GM12878 (cell line): ENCODE measurements at regions of chr2 and their contacts with region 1.

Region 1: GRCh38 chr2:215912299-215912842 is 101.0 kb downstream of the MREG start:
- DNase-seq: no peak
- ATAC-seq: no peak
- H3K4me3 ChIP-seq: no peak overlapping the region
- H3K27ac ChIP-seq: no peak overlapping the region
- H3K4me1 ChIP-seq: peaks cover 10% of the 10 kb centered on the region; the same call in 1 of the 2 replicates
- H3K27me3 ChIP-seq: no peaks in the 10 kb centered on the region
- CTCF ChIP-seq: no peak
- EP300 ChIP-seq: no peak
- POLR2A ChIP-seq: no peak
- RAD21 ChIP-seq: no peak

Region 2: GRCh38 chr2:215567504-215567903 is 344.9 kb before region 1 on chr2:
- CTCF ChIA-PET with region 1: no interaction called
- POLR2A ChIA-PET with region 1: no interaction called
- RAD21 ChIA-PET with region 1: interaction called, 23 read pairs
- SMC1A ChIA-PET with region 1: interaction called, 25 read pairs
- in situ Hi-C with region 1: no loop called
- intact Hi-C with region 1: no loop called
- DNase-seq: peak; percentile 38
- ATAC-seq: peak; percentile 98
- H3K4me3 ChIP-seq: no peak overlapping the region
- H3K27ac ChIP-seq: no peak overlapping the region
- H3K4me1 ChIP-seq: no peaks in the 10 kb centered on the region
- H3K27me3 ChIP-seq: no peaks in the 10 kb centered on the region
- CTCF ChIP-seq: no peak
- EP300 ChIP-seq: peak; percentile 66 to 85
- POLR2A ChIP-seq: no peak
- RAD21 ChIP-seq: no peak

Region 3: DNA sequence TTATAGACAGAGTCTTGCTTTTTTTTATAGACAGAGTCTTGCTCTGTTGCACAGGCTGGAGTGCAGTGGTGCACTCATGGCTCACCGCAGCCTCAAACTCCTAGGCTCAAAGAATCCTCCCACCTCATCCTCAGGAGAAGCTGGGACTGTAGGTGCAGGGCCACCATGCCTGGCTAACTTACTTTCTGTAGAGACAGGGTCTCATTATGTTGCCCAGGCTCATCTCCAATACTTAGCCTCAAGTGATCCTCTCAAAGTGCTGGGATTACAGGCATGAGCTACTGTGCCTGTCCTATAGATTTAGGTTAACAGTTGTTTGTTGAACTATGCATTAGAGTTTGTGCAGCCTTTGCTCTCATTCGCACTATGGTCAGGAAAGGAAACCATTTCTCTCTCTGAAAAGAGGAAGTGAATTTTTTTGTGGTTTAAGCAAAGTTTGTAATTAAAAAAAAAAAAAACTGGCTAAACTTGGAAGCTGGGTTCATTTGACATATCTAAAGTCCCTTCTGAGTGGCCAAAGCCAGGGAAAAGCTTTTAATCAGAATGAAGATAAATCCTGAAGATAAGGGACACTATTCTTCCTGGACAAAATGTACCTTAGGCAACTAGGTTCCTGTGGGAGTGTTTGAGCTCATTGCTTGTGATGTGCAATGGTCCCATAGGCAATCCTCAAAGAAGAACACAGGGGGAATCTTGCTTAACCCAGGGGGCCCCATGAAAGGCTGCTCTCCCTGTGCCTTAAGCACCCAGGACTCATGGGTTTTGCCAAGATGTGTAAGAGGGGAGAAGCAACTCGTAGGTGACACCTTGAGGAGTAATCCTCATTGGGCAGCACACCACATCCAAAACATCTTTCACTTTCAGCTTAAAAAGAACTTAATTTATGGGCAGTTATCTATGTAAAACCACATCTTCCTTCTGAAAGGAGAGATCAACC is 100.7 kb before region 1 on chr2:
- CTCF ChIA-PET with region 1: interaction called, 5 read pairs
- POLR2A ChIA-PET with region 1: interaction called, 7 read pairs
- RAD21 ChIA-PET with region 1: interaction called, 39 read pairs
- SMC1A ChIA-PET with region 1: interaction called, 17 read pairs
- in situ Hi-C with region 1: no loop called
- intact Hi-C with region 1: loop called (anchors 5 kb)
- DNase-seq: peak; percentile 90
- ATAC-seq: peak; percentile 98
- H3K4me3 ChIP-seq: peak overlapping the region; percentile 30; the same call in 1 of the 2 replicates
- H3K27ac ChIP-seq: peak overlapping the region; percentile 45
- H3K4me1 ChIP-seq: peaks cover 19% of the 10 kb centered on the region
- H3K27me3 ChIP-seq: no peaks in the 10 kb centered on the region
- CTCF ChIP-seq: no peak
- EP300 ChIP-seq: peak in 1 of 2 experiments; percentile 87; a peak in 2 of 4 replicates
- POLR2A ChIP-seq: no peak
- RAD21 ChIP-seq: no peak

Region 4: DNA sequence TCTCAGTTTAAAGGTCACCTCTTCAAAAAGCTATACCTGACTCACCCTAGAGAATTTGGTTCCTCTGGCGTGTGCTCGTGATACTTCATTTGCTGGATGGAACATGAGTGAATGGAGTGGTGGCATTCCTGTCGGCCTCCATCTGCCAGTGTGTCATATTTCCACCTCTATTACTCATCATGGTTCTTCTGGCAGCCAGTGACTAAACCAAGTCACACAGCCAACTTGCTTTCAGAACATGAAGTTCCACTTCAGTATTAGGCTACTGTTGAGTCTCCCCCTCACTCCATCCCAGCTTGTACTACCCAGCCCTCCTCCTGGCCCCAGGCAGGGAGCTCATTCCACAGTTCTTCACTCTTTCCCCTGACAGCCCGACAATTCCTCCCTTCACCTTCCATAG is 68.8 kb before region 1 on chr2:
- CTCF ChIA-PET with region 1: interaction called, 13 read pairs
- POLR2A ChIA-PET with region 1: interaction called, 5 read pairs
- RAD21 ChIA-PET with region 1: interaction called, 28 read pairs
- SMC1A ChIA-PET with region 1: interaction called, 41 read pairs
- in situ Hi-C with region 1: no loop called
- intact Hi-C with region 1: no loop called
- DNase-seq: no peak
- ATAC-seq: no peak
- H3K4me3 ChIP-seq: no peak overlapping the region
- H3K27ac ChIP-seq: no peak overlapping the region
- H3K4me1 ChIP-seq: peaks cover 42% of the 10 kb centered on the region
- H3K27me3 ChIP-seq: no peaks in the 10 kb centered on the region
- CTCF ChIP-seq: no peak
- EP300 ChIP-seq: no peak
- POLR2A ChIP-seq: no peak
- RAD21 ChIP-seq: no peak

Region 5: DNA sequence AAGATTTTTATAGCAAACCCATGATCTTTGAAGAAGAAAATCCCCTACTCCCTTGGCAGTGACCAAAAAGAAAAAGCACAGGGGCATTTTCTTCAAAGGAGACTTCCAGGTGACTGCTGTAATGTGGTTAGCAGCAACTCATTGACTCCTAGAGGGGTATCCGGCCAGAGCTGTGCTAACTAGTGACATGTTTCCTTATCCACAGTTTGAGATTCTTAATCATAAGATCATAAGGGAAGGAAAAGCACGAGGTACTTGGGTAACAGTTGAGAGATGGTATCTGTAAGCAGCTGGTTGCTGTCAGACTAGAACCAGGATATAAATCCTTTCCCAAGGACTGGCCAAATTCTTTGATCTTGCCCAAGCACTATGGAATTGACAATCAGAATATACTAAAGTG is 23.7 kb before region 1 on chr2:
- CTCF ChIA-PET with region 1: interaction called, 7 read pairs
- POLR2A ChIA-PET with region 1: interaction called, 5 read pairs
- RAD21 ChIA-PET with region 1: interaction called, 76 read pairs
- SMC1A ChIA-PET with region 1: interaction called, 185 read pairs
- in situ Hi-C with region 1: no loop called
- intact Hi-C with region 1: loop called (anchors 5 kb)
- DNase-seq: no peak
- ATAC-seq: peak; percentile 63
- H3K4me3 ChIP-seq: no peak overlapping the region
- H3K27ac ChIP-seq: no peak overlapping the region
- H3K4me1 ChIP-seq: peaks cover 5% of the 10 kb centered on the region
- H3K27me3 ChIP-seq: no peaks in the 10 kb centered on the region
- CTCF ChIP-seq: no peak
- EP300 ChIP-seq: no peak
- POLR2A ChIP-seq: no peak
- RAD21 ChIP-seq: no peak

Region 6: GRCh38 chr2:216023055-216023648 is 110.8 kb after region 1 on chr2:
- CTCF ChIA-PET with region 1: no interaction called
- POLR2A ChIA-PET with region 1: no interaction called
- RAD21 ChIA-PET with region 1: no interaction called
- SMC1A ChIA-PET with region 1: no interaction called
- in situ Hi-C with region 1: no loop called
- intact Hi-C with region 1: no loop called
- DNase-seq: no peak
- ATAC-seq: peak; percentile 97
- H3K4me3 ChIP-seq: no peak overlapping the region
- H3K27ac ChIP-seq: no peak overlapping the region
- H3K4me1 ChIP-seq: no peaks in the 10 kb centered on the region
- H3K27me3 ChIP-seq: no peaks in the 10 kb centered on the region
- CTCF ChIP-seq: peak; percentile 70 to 73 (median 71)
- EP300 ChIP-seq: no peak
- POLR2A ChIP-seq: no peak
- RAD21 ChIP-seq: peak; percentile 89